Breast epithelium (tissue), 4 donors: ENCODE measurements at regions of chr19 and their contacts with region 1.

Region 1: GRCh38 chr19:56167064-56167578 is 8.7 kb upstream of the GALP start:
- DNase-seq: no peak
- H3K4me3 ChIP-seq: no peak overlapping the region
- H3K27ac ChIP-seq: no peak overlapping the region
- H3K4me1 ChIP-seq: no peaks in the 10 kb centered on the region
- H3K27me3 ChIP-seq: no peaks in the 10 kb centered on the region
- CTCF ChIP-seq: no peak
- POLR2A ChIP-seq: no peak

Region 2: GRCh38 chr19:56076498-56076897 is 90.6 kb before region 1 on chr19:
- intact Hi-C with region 1: loop called (anchors 5 kb)
- DNase-seq: no peak
- H3K4me3 ChIP-seq: no peak overlapping the region
- H3K27ac ChIP-seq: no peak overlapping the region
- H3K4me1 ChIP-seq: peaks cover 0 to 5% of the 10 kb centered on the region in 2 donors
- H3K27me3 ChIP-seq: no peaks in the 10 kb centered on the region
- CTCF ChIP-seq: peak; percentile 53 to 77 (median 71)
- POLR2A ChIP-seq: no peak

Region 3: DNA sequence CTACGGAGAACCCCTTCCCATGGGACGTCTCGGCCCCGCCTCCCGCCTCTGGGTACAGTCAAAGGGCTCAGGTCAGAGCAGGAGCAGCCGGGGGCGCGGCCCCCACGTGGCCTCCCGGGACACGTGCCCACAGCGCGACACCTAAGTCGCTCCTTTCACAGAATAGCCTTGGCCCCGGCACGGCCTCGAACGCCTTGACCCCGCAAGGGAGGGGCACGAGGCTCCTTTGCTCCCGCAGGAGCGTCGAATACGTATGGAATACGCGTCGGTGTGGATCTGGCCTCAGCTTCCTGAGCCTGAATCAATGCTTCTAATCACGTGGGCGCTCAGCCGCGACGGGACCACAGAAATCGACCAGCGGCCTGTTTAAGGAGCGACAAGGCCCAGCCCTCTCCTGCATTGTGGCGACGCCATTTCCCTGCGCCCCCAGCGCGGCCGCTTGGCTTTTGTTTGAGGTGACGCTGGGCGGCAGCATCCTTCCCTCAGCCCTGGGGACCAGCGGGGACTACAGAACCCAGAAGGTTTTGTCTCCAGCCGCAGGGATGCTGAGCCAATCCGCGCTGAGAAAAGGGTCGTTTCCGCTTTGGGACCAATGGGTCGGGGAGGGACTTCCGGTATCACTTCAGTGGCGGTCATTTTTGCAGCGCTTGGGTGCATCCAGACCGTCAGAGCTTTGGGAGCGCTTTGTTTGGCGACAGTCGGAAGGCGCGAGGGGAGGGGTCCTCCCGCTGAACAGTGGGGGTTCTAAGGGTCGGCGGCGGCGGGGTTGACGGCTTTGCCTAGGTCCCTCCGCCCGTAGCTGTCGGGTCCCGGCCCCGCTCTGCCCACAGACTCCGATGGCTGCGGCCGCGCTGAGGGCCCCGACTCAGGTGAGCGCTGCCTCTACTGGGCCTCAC is 1416.6 kb after region 1 on chr19 and contains the start of gene ZIK1:
- intact Hi-C with region 1: no loop called
- DNase-seq: peak; percentile 85
- H3K4me3 ChIP-seq: peak within 1 kb of the TSS; percentile 55 to 72 (median 72)
- H3K27ac ChIP-seq: peak within 1 kb of the TSS; percentile 4 to 41
- H3K4me1 ChIP-seq: peaks cover 0 to 3% of the 10 kb centered on the region in 2 donors
- H3K27me3 ChIP-seq: no peaks in the 10 kb centered on the region
- CTCF ChIP-seq: peak in 1 of 3 donors; percentile 7
- POLR2A ChIP-seq: no peak
- total RNA-seq, gene ZIK1: 2.2 to 8.9 (median 6.9) TPM